Right ventricle myocardium superior (tissue), 1 donor: ENCODE measurements at regions of chr17 and their contacts with region 1.

Region 1: GRCh38 chr17:49031965-49032928 is 35.1 kb downstream of the IGF2BP1 start:
- DNase-seq: no peak
- ATAC-seq: peak; percentile 81

Region 2: GRCh38 chr17:48678141-48678971 is 353.9 kb before region 1 on chr17:
- intact Hi-C with region 1: loop called (anchors 10 kb)
- DNase-seq: peak; percentile 68
- ATAC-seq: peak; percentile 82

Region 3: DNA sequence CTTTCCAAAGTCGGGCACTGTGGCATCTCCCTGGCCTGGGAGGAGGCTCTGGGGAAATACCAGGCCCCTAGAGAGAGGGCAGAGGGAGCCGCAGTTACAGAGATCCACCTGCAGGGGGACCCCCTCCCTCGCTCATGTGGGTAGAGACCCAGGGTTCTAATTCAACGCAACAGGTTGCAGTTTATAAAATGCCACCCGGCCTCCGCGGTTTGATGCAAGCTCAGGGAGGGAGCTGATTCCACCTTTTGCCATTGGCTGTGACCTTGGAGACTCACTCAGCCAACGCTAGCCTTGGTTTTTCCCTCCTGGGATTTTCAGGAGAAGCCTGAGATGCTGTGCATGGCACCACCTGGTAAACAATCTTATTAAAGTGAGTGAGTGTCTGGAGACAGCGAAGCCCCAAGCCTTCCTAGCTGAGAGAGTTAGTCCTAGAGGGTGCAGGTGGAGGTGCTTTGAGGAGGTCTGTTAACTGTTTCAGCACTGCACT is 227.3 kb before region 1 on chr17:
- intact Hi-C with region 1: loop called (anchors 10 kb)
- DNase-seq: peak; percentile 61
- ATAC-seq: peak; percentile 88

Region 4: GRCh38 chr17:49201481-49201927 is 169.3 kb after region 1 on chr17:
- intact Hi-C with region 1: no loop called
- DNase-seq: no peak
- ATAC-seq: no peak